ENCODE measurements at regions of chr19 and their contacts with region 1.

Region 1: GRCh38 chr19:51016798-51017683 is 2.5 kb downstream of the KLK10 start:
- DNase-seq: peak; percentile 92
- ATAC-seq: peak; percentile 62
- H3K4me3 Mint-ChIP-seq: peak overlapping the region; percentile 89
- H3K27ac Mint-ChIP-seq: no peak overlapping the region
- H3K4me1 Mint-ChIP-seq: peaks cover 16% of the 10 kb centered on the region
- H3K27me3 Mint-ChIP-seq: peaks cover 56% of the 10 kb centered on the region
- CTCF ChIP-seq: peak; percentile 81

Region 2: GRCh38 chr19:50933640-50934039 is 83.4 kb before region 1 on chr19:
- CTCF ChIA-PET with region 1: interaction called, 93 read pairs
- POLR2A ChIA-PET with region 1: interaction called, 4 read pairs
- DNase-seq: no peak
- ATAC-seq: no peak
- H3K4me3 Mint-ChIP-seq: no peak overlapping the region
- H3K27ac Mint-ChIP-seq: no peak overlapping the region
- H3K4me1 Mint-ChIP-seq: peaks cover 6% of the 10 kb centered on the region
- H3K27me3 Mint-ChIP-seq: peaks cover 32% of the 10 kb centered on the region
- CTCF ChIP-seq: no peak

Region 3: DNA sequence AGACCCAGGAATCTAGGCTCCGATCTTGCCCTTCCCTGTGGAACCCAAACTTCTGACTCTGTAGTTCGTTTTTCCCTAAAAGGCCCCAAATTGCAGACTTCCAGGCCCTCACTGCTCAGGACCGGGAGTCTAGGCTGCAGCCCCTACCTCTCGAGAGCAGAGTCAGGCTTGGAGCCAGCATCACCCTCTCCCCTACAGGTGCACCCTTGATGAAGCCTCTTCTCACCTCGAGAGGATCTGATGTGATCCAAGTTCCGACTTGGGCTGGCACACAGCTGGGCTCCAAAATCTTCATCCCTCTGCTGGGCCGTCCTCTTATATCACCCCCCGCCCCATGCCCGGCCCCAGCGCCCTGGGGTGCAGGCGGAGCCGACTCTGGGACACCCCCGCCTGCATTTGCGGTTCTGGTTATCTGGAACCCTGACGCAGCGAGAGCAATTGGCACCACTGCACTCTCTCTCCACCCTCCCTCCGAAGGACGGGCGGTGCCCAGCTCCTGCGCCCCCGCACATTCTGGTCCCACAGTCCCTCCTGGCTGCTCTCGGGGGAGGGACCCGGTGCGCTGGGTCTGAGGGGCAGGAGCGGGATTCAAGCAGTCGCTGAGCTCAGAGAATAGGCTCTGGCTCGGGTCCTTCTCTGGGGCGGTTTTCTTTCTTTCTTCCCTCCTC is 33.3 kb before region 1 on chr19 and contains the start of gene KLK7:
- CTCF ChIA-PET with region 1: interaction called, 10 read pairs
- POLR2A ChIA-PET with region 1: no interaction called
- DNase-seq: no peak
- ATAC-seq: peak; percentile 61
- H3K4me3 Mint-ChIP-seq: peak within 1 kb of the TSS; percentile 65
- H3K27ac Mint-ChIP-seq: no peak within 1 kb of the TSS
- H3K4me1 Mint-ChIP-seq: peaks cover 14% of the 10 kb centered on the region
- H3K27me3 Mint-ChIP-seq: peaks cover 70% of the 10 kb centered on the region
- CTCF ChIP-seq: no peak
- total RNA-seq, gene KLK7: 0.66 to 0.87 TPM (median 0.78 TPM) in 3 replicates

Region 4: DNA sequence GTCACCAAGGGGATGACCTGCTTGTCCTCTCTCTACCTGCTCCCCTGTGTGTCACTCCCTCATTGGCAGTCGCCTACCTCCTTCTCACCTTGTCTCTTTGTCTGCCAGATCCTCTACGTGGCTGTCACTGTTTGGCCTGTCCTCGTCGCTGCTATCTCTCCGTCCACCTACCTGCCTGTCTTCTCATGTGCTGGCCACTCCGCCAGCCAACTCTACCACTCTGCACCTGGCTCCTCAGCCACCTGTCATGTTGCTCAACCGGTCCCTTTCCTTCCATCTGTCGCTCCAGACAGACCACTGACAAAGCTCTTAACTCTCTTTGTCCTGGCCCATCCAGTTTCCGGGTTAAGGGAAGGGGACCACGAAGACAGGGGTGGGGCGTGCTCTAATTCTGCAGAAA is 17.7 kb after region 1 on chr19 and contains the start of gene KLK12:
- CTCF ChIA-PET with region 1: interaction called, 12 read pairs
- POLR2A ChIA-PET with region 1: interaction called, 3 read pairs
- DNase-seq: no peak
- ATAC-seq: no peak
- H3K4me3 Mint-ChIP-seq: no peak within 1 kb of the TSS
- H3K27ac Mint-ChIP-seq: no peak within 1 kb of the TSS
- H3K4me1 Mint-ChIP-seq: peaks cover 27% of the 10 kb centered on the region
- H3K27me3 Mint-ChIP-seq: peaks cover 6% of the 10 kb centered on the region
- CTCF ChIP-seq: no peak
- total RNA-seq, gene KLK12: not detected in 3 replicates

Region 5: GRCh38 chr19:51064534-51065220 is 47.6 kb after region 1 on chr19 and contains the start of gene KLK13:
- CTCF ChIA-PET with region 1: interaction called, 19 read pairs
- POLR2A ChIA-PET with region 1: interaction called, 5 read pairs
- DNase-seq: peak; percentile 69
- ATAC-seq: peak; percentile 81
- H3K4me3 Mint-ChIP-seq: peak within 1 kb of the TSS; percentile 76
- H3K27ac Mint-ChIP-seq: no peak within 1 kb of the TSS
- H3K4me1 Mint-ChIP-seq: peaks cover 8% of the 10 kb centered on the region
- H3K27me3 Mint-ChIP-seq: peaks cover 10% of the 10 kb centered on the region
- CTCF ChIP-seq: no peak
- total RNA-seq, gene KLK13: 3.1 to 5.0 TPM (median 4.5 TPM) in 3 replicates

Region 6: GRCh38 chr19:51097166-51097738 is 80.2 kb after region 1 on chr19:
- CTCF ChIA-PET with region 1: interaction called, 347 read pairs
- POLR2A ChIA-PET with region 1: interaction called, 4 read pairs
- DNase-seq: peak; percentile 83
- ATAC-seq: peak; percentile 62
- H3K4me3 Mint-ChIP-seq: no peak overlapping the region
- H3K27ac Mint-ChIP-seq: no peak overlapping the region
- H3K4me1 Mint-ChIP-seq: peaks cover 15% of the 10 kb centered on the region
- H3K27me3 Mint-ChIP-seq: no peaks in the 10 kb centered on the region
- CTCF ChIP-seq: peak; percentile 80